Activated CD4-positive, alpha-beta T cell treated with anti-CD3 and anti-CD28 coated beads, Interleukin-2, amount 10 ng/mL, durations not matched to agents 24 days and 14 days (primary cell): ENCODE measurements at regions of chr1 and their contacts with region 1.

Region 1: DNA sequence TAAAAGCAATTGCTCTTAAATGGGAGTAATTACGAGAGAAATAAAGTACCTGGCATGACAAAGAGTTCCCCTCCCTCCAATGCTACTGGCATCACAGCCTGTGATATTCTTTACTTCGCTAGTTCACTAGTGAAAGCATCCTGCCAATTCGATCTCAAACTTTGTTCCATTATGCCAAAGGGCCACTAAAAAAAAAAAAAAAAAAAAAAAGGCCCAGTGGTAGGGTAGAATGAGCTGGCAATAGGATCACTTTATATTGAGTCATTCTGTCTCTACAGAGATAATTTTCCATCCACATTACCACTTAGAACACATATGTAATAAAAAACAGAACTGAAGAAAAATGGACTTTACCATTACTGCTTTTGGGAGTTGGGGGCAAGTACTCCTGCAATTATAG is 11.2 kb downstream of the PUM1 start:
- DNase-seq: no peak
- H3K4me3 Mint-ChIP-seq: peak overlapping the region; percentile 8
- H3K27ac Mint-ChIP-seq: peak overlapping the region; percentile 73
- H3K4me1 Mint-ChIP-seq: peaks cover 49% of the 10 kb centered on the region
- H3K27me3 Mint-ChIP-seq: no peaks in the 10 kb centered on the region

Region 2: DNA sequence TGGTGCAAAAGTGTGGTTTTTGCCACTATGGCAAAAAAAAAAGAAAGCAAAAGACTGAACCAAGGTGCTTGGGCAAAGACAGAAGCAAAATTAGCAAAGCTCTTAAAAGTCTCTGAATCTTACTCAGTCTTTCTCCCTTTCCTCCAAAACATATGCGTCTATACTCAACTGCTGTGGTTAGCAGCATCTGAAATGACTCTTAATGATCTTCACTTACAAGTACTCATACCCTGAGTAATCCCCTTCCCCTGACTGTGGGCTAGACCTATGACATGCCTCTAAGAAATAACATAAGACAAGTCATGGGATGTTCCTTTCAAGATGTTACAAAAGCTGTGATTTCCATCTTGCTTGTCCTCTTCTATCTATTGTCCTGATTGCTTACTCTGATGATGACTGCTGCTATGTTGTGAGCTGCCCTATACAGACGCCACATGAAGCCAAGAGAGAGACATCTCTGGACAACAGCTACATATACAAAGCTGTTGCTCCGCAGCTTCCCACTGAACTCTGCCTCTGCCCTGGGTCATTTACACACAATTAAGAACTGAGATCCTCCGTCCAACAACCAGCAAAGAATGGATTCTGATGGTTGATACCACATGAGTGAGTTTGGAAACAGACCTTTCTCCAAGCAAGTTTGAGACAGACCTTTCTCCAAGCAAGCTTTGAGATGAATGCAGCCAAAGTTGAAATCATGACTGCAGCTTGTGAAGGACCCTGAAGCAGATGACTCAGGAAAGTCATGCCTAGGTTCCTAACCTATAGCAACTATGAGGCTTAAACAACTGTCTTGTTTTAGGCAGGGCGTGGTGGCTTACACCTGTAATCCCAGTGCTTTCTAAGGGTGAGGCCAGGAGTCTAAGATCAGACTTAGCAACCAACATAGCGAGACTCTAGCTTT is 44.0 kb before region 1 on chr1:
- intact Hi-C with region 1: loop called (anchors 1 kb)
- DNase-seq: peak; percentile 67
- H3K4me3 Mint-ChIP-seq: no peak overlapping the region
- H3K27ac Mint-ChIP-seq: peak overlapping the region; percentile 81
- H3K4me1 Mint-ChIP-seq: peaks cover 47% of the 10 kb centered on the region
- H3K27me3 Mint-ChIP-seq: no peaks in the 10 kb centered on the region

Region 3: GRCh38 chr1:31022259-31022658 is 32.1 kb before region 1 on chr1:
- intact Hi-C with region 1: no loop called
- DNase-seq: no peak
- H3K4me3 Mint-ChIP-seq: no peak overlapping the region
- H3K27ac Mint-ChIP-seq: no peak overlapping the region
- H3K4me1 Mint-ChIP-seq: peaks cover 35% of the 10 kb centered on the region
- H3K27me3 Mint-ChIP-seq: no peaks in the 10 kb centered on the region

Region 4: GRCh38 chr1:31036749-31037500 is 17.4 kb before region 1 on chr1:
- intact Hi-C with region 1: loop called (anchors 2 kb)
- DNase-seq: no peak
- H3K4me3 Mint-ChIP-seq: peak overlapping the region; percentile 38
- H3K27ac Mint-ChIP-seq: peak overlapping the region; percentile 21
- H3K4me1 Mint-ChIP-seq: peaks cover 34% of the 10 kb centered on the region
- H3K27me3 Mint-ChIP-seq: no peaks in the 10 kb centered on the region